Heart right ventricle (tissue), 16 donors: ENCODE measurements at regions of chr6 and their contacts with region 1.

Region 1: GRCh38 chr6:122459213-122459612 is 12.4 kb downstream of the SERINC1 start:
- DNase-seq: no peak
- ATAC-seq: peak in 1 of 8 donors; percentile 19
- H3K4me3 ChIP-seq: no peak overlapping the region
- H3K27ac ChIP-seq: peak overlapping the region in 1 of 10 donors; percentile 0
- H3K4me1 ChIP-seq: peaks cover 0 to 84% (median 62%) of the 10 kb centered on the region in 9 donors
- H3K27me3 ChIP-seq: no peaks in the 10 kb centered on the region
- CTCF ChIP-seq: no peak

Region 2: DNA sequence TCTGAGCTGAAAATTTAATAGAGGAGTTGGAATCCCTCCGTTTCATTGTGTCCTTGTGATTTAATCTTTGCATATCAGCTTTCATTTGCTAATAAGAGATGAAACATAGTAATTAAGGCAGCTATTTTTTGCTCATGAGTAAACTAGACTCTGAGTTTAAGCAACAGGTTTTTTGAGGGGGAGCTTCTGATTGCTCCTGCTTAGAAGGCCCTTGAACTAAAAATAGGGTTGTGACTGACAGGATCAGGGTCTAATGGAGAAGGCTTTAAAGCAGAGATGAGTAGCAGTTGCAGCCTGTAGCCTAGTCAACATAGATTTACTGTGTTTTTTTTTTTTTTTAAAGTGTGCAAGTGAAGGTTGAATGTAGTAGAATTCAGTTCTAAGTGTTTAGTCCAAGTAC is 42.4 kb before region 1 on chr6:
- intact Hi-C with region 1: loop called in 3 of 10 experiments (anchors 5 kb)
- DNase-seq: no peak
- ATAC-seq: peak in 7 of 8 donors; percentile 73 to 97 (median 89)
- H3K4me3 ChIP-seq: no peak overlapping the region
- H3K27ac ChIP-seq: peak overlapping the region in 7 of 10 donors; percentile 4 to 64 (median 33)
- H3K4me1 ChIP-seq: peaks cover 0 to 7% (median 0%) of the 10 kb centered on the region in 9 donors
- H3K27me3 ChIP-seq: no peaks in the 10 kb centered on the region
- CTCF ChIP-seq: no peak

Region 3: GRCh38 chr6:122422614-122423267 is 36.5 kb before region 1 on chr6:
- intact Hi-C with region 1: loop called in 3 of 10 experiments (anchors 5 kb)
- DNase-seq: no peak
- ATAC-seq: no peak
- H3K4me3 ChIP-seq: no peak overlapping the region
- H3K27ac ChIP-seq: no peak overlapping the region
- H3K4me1 ChIP-seq: peaks cover 0 to 1% (median 0%) of the 10 kb centered on the region in 9 donors
- H3K27me3 ChIP-seq: no peaks in the 10 kb centered on the region
- CTCF ChIP-seq: no peak

Region 4: DNA sequence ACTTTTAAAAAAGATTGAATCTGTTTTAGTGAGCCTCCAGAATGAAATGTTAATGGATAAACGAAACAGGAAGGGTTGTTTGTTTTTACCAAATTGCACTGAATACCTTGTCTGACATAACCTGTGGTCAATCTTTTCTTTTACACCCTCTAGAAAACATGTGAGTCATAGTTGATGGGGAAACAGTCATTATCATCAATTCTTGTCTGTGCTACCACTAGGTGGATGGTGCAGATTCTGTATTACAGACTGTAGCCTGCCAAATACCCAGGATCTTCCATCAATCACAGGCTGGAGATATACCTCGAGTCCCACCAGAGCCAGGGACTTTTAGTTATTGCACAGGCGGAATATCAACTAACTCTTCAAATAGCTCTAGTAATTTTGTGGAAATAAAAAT is 121.5 kb after region 1 on chr6:
- intact Hi-C with region 1: no loop called
- DNase-seq: no peak
- ATAC-seq: no peak
- H3K4me3 ChIP-seq: no peak overlapping the region
- H3K27ac ChIP-seq: no peak overlapping the region
- H3K4me1 ChIP-seq: no peaks in the 10 kb centered on the region
- H3K27me3 ChIP-seq: no peaks in the 10 kb centered on the region
- CTCF ChIP-seq: no peak